Mucosa of descending colon (tissue), 3 donors: ENCODE measurements at regions of chr2 and their contacts with region 1.

Region 1: GRCh38 chr2:79750321-79750720 is 237.5 kb downstream of the CTNNA2 start:
- DNase-seq: peak; percentile 74 to 79 (median 78)
- ATAC-seq: peak; percentile 97
- H3K4me3 ChIP-seq: no peak overlapping the region
- H3K4me1 ChIP-seq: no peaks in the 10 kb centered on the region
- CTCF ChIP-seq: no peak

Region 2: GRCh38 chr2:79711098-79711497 is 39.2 kb before region 1 on chr2:
- intact Hi-C with region 1: no loop called
- DNase-seq: no peak
- ATAC-seq: no peak
- H3K4me3 ChIP-seq: no peak overlapping the region
- H3K4me1 ChIP-seq: no peaks in the 10 kb centered on the region
- CTCF ChIP-seq: no peak

Region 3: DNA sequence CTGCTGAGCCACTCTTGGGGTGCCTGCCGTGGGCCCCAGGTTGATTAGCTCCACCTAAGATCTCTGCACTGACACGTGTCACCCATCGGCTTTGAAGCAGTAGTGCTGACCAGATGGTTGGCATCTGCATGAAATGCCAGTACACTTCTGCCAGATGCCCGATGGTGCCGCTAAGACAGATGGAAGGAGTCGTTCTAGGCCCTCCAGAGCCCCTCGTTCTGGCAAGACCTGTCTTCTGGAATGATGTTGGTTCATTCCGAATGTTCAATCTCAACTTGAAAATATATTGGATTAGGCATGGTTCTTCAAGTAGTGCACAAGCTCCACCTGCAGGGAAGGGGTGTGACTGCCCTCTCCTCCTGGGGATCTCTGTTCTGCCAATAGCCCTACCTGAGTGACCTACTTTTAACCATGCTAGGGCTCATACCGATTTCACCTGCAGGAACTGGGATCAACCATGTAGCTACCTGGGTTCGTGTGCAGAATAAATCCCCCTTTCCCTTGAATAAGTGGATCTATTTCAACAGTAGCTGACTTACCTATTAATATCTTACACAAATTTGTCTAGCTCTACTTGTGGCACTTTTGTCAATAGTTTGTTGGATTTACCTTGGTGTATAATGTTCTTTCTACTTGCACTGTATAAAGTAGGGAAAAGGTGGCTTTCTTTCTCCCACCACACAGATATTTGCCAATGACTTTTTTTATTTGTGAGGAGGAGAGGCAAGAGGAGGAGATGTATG is 105.1 kb after region 1 on chr2:
- intact Hi-C with region 1: loop called in 1 of 2 experiments (anchors 10 kb)
- DNase-seq: peak in 2 of 3 donors; percentile 32 to 59
- ATAC-seq: peak; percentile 66
- H3K4me3 ChIP-seq: no peak overlapping the region
- H3K4me1 ChIP-seq: no peaks in the 10 kb centered on the region
- CTCF ChIP-seq: peak; percentile 8